ENCODE measurements at regions of chr7 and their contacts with region 1.

Region 1: GRCh38 chr7:28926871-28927597 is 31.1 kb downstream of the TRIL start:
- DNase-seq: peak; percentile 62 to 76
- H3K4me3 ChIP-seq: peak overlapping the region; percentile 51 to 62 (median 53)
- H3K27ac ChIP-seq: peak overlapping the region in 1 of 2 donors; percentile 39
- H3K4me1 ChIP-seq: no peaks in the 10 kb centered on the region
- H3K27me3 ChIP-seq: no peaks in the 10 kb centered on the region
- CTCF ChIP-seq: peak; percentile 77 to 82 (median 79)
- POLR2A ChIP-seq: no peak

Region 2: DNA sequence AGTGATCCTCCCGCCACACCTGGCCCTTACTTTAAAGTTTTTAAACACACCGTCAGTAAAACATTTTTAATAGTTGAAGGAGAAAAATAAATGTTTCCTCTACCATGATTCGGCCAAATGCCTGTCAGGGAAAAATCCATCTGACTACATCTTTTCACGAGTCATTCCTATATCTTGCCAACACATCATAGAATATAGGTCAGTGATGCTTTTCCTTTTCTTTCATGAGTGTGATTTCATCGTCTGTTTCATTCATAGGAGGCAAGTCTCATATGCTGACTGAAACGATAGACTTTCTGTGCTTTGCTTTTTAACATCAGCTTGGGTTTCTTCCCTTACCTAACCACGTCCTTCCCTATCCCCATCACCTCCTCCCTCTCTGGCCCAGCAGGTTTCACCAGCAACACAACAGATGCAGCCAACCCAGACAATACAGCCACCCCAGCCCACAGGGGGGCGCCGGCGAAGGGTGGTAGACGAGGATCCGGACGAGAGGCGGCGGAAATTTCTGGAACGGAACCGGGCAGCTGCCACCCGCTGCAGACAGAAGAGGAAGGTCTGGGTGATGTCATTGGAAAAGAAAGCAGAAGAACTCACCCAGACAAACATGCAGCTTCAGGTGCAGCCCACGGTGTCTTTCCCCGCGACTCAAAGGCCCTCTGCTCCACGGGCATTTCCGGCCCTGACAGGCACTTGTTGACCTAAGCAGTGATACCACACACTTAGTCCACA is 118.1 kb before region 1 on chr7:
- intact Hi-C with region 1: no loop called
- DNase-seq: no peak
- H3K4me3 ChIP-seq: no peak overlapping the region
- H3K27ac ChIP-seq: no peak overlapping the region
- H3K4me1 ChIP-seq: no peaks in the 10 kb centered on the region
- H3K27me3 ChIP-seq: no peaks in the 10 kb centered on the region
- CTCF ChIP-seq: no peak
- POLR2A ChIP-seq: no peak

Region 3: GRCh38 chr7:29405891-29406290 is 478.9 kb after region 1 on chr7:
- intact Hi-C with region 1: loop called (anchors 2 kb)
- DNase-seq: no peak
- H3K4me3 ChIP-seq: no peak overlapping the region
- H3K27ac ChIP-seq: no peak overlapping the region
- H3K4me1 ChIP-seq: no peaks in the 10 kb centered on the region
- H3K27me3 ChIP-seq: no peaks in the 10 kb centered on the region
- CTCF ChIP-seq: no peak
- POLR2A ChIP-seq: no peak

Measured in breast epithelium (tissue), 4 donors.